ENCODE measurements at regions of chr2 and their contacts with region 1.

Region 1: DNA sequence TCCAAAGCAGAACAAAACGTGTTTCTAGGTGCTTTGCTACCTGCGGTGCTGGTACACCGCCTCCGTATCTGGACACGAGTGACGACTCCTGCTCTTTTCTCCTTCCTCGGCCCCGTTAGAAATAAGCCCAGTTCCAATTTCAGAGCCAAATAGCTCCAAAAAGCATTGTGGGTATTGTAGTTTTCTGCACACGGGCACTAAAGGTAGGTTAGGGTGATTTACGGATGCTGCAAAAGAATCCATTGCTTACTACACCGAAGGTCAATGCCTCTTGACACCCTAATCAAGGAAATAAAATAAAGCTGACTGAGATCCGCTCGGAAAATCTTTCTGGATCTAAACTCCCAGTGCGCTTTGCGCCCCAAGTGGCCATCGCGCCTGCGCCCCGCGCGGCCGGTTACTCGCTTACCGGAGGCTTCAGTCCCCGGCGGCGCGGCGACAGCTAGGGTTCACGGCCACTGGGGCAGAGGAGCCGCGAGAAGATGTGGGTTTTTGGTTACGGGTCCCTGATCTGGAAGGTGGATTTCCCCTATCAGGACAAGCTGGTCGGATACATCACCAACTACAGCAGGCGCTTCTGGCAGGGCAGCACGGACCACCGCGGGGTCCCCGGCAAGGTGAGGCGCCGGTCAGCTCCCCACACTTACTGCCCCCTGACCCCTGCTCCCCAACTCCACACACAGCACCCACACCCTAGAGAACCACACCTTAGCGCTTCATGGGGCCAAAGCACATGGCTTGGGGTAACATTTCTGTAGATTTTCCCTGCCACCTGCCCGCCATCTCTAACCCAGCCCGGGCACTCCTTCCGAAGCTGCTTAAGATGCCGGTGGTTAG is at the start of gene CHAC2:
- DNase-seq: peak; percentile 89
- H3K4me3 ChIP-seq: peak within 1 kb of the TSS; percentile 77 to 90
- H3K27ac ChIP-seq: peak within 1 kb of the TSS; percentile 76 to 97
- H3K4me1 ChIP-seq: peaks cover 4 to 5% of the 10 kb centered on the region in 2 experiments; a peak in 3 of 4 replicates
- H3K27me3 ChIP-seq: no peaks in the 10 kb centered on the region
- CTCF ChIP-seq: no peak; the same call in 1 of the 2 replicates
- EP300 ChIP-seq: no peak
- RAD21 ChIP-seq: no peak
- polyA plus RNA-seq, gene CHAC2: 2.1 and 2.9 TPM in 2 replicates

Region 2: DNA sequence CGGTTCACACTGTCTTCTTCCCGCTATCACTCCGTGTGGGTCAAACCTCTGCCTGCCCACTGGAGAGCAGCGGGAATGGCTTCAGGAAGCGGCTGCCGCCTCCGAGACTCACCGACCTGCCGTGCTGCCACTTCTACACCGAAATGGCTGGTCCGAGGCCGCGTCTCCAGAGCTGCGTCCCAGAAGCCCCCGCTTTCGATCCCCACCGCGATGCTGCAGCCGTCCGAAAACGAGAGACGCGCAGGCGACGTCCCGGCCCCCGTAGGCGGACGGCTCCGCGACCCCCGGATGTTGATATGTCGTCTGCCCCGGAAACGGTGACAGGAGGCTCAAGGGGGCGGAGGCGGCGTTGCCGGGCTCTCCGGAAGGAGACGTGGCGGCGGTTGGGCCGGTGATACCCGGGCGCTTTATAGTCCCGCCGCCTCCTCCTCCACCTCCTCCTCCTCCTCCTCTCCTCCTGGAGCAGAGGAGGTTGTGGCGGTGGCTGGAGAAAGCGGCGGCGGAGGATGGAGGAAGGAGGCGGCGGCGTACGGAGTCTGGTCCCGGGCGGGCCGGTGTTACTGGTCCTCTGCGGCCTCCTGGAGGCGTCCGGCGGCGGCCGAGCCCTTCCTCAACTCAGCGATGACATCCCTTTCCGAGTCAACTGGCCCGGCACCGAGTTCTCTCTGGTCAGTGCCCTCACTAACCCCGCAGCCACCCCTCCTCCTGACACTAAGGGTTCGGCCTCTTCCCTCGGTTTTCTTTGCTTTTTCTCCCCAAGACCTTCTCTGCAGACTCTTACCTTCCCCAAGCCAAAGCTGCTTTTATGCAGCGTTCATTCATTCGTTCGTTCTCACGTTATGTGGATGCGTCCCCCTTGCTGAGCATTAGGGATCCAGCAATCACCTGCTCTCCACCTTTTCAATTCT is 19.3 kb after region 1 on chr2 and contains the starts of genes ASB3 and ERLEC1:
- CTCF ChIA-PET with region 1: interaction called, 4 read pairs
- POLR2A ChIA-PET with region 1: interaction called, 20 read pairs
- DNase-seq: peak; percentile 94
- H3K4me3 ChIP-seq: peak within 1 kb of the TSS; percentile 88 to 98
- H3K27ac ChIP-seq: peak within 1 kb of the TSS; percentile 81 to 89
- H3K4me1 ChIP-seq: peaks cover 14% of the 10 kb centered on the region in 2 experiments; a peak in 3 of 4 replicates
- H3K27me3 ChIP-seq: no peaks in the 10 kb centered on the region
- CTCF ChIP-seq: no peak
- EP300 ChIP-seq: 0 out of 4 replicates have a peak, but pooled peaks of 1 of the 2 experiments have one; percentile 12
- RAD21 ChIP-seq: no peak
- polyA plus RNA-seq, gene ASB3: 16.2 and 23.3 TPM in 2 replicates
- polyA plus RNA-seq, gene ERLEC1: 59.8 and 61.7 TPM in 2 replicates

Measured in SK-N-SH (cell line).